Right ventricle myocardium inferior (tissue), 1 donor: ENCODE measurements at regions of chr3 and their contacts with region 1.

Region 1: DNA sequence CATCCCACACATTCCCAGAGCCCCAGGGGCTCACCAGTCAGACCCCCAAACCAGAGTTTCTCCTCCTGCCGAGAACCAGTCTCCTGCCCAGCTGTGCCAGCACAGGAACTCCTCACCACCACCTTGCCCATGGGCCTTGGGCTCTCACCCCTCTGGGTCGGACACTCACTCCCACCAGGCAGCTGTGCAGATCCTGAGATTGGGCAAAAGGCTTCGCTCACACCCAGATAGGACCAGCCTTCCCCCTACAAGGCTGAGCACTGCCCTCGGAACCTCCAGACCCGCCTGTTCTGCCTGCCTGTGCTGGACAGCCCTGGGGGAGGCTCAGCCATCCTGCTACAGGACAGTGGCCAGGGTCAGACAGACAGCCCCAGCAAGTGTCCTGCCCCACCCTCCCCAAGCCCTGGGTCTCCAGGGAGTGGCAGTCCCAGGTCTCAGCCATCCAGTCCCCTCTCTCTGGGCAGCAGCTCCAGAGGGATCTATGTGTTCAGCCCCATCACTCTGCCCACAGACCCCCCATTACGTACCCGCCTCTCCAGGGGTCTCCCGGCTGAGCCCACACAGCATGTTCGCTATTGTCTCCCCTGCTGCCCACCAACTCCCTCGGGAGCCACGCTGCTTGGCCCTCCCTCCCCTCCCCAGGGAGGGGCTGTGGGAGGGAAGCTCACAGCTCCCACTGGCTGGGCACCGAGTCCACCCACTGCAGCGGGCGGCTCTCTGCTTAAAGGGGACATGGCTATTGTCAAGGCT is at the start of gene GRIP2:
- DNase-seq: no peak
- ATAC-seq: peak; percentile 81
- total RNA-seq, gene GRIP2: 39.3 TPM

Region 2: GRCh38 chr3:14522129-14522691 is 17.7 kb before region 1 on chr3:
- intact Hi-C with region 1: loop called (anchors 1 kb)
- DNase-seq: no peak
- ATAC-seq: peak; percentile 85